Right ventricle myocardium inferior (tissue), 1 donor: ENCODE measurements at regions of chr15 and their contacts with region 1.

Region 1: GRCh38 chr15:79380755-79381497 is 51.2 kb upstream of the MINAR1 start:
- DNase-seq: peak; percentile 70
- ATAC-seq: peak; percentile 81

Region 2: GRCh38 chr15:79593119-79593867 is 212.4 kb after region 1 on chr15:
- intact Hi-C with region 1: loop called (anchors 5 kb)
- DNase-seq: no peak
- ATAC-seq: no peak

Region 3: DNA sequence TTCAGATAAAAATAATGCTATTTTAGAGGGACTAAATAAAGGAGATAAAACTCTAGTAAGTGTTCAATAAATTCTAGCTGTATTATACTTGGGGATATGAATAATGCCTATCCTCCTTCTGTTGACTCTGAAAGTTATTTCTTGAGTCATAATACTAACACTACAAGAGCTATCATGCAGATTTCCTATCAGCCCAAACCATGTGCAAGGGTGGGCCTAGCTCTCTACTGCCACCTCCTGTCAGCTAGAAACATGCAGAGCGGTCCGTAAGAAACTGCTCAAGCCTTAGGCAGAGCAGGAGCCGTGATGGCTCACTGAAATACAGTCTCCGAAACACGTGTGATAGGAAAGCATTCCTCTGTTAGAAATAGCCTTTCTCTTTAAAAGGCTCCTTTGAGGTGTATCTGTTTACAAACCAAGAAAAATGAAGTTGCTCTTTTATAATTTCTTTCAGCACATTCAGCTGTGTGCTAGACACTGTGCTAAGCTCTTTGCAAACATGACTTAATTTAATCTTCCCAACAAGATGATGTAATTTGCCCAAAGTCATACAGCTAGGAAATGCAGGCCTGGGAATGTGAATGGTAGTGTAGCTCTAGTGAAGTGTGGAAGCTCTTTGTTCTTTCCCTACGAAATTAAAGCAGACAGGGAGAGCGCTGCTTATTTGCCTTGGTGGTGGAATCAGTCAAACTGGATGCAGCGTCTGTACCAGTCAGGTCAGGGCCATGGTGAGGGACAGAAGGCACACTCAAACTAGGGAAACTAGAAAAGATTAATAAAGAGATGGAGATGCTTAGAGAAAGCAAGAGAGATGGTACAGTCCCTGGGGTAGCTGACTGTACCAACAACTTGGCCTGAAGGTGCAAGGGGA is 472.8 kb after region 1 on chr15:
- intact Hi-C with region 1: loop called (anchors 1 kb)
- DNase-seq: no peak
- ATAC-seq: peak; percentile 88

Region 4: GRCh38 chr15:79994615-79995014 is 613.7 kb after region 1 on chr15:
- intact Hi-C with region 1: loop called (anchors 2 kb)
- DNase-seq: no peak
- ATAC-seq: no peak